ENCODE measurements at regions of chr12 and their contacts with region 1.

Region 1: DNA sequence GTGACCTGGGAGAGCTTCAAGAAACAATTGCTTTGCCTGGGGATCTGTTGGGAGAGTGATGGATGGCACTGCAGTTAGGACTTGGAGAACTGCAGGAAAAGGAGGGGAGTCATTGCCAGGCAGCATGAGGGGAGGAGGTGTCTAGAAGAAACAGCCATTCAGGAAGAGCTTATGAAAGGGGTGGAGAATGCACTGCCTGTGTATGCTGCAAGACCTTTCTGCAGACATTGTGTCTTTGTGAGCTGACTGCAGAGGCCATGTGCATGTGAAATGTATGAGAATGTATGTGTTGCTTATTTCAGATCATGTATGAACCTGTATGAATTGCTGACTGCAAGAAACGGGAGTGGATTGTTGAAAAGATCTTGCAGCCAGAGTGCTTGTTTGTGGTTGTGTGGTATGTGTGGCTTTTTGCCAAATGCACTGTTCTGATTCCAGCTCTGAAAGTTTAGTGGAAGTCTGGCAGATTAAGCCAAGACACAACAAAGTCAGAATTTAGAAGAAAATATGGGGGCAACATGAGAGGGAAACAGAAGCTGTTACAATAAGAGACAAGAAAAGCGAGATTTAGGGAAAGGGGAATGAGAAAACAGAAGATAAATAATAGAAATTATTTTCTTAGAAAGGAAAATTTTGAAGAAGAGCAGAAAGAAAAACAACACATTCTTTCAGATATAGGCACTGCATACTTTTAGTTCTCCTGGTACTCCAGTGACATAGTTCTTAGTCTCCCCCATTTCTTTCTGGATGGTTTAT is 9.8 kb upstream of the RIMKLB start:
- DNase-seq: peak in 3 of 10 donors; percentile 31 to 39 (median 32)
- H3K4me3 ChIP-seq: peak overlapping the region in 7 of 59 donors; percentile 0 to 26 (median 12)
- H3K27ac ChIP-seq: peak overlapping the region in 37 of 59 donors; percentile 1 to 73 (median 45)
- H3K27me3 ChIP-seq: no peaks in the 10 kb centered on the region
- CTCF ChIP-seq: no peak

Region 2: DNA sequence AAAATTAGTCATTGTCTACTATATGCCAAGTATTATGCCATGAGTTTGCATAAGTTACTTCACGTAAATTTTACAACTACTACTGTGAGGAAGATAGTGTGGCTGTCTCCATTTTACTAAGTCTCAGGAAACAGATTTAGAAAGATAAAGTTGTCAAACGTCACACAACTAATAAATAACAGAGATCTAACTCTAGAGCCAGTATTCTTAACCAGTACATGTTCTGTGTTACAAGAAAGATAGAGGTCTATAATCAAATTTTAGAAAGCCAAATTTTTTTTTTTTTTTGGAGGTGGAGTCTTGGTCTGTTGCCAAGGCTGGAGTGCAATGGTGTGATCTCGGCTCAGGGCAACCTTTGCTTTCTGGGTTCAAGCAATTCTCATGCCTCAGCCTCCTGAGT is 955.0 kb before region 1 on chr12:
- intact Hi-C with region 1: no loop called
- DNase-seq: no peak
- H3K4me3 ChIP-seq: no peak overlapping the region
- H3K27ac ChIP-seq: no peak overlapping the region
- H3K27me3 ChIP-seq: peaks cover 0 to 3% (median 0%) of the 10 kb centered on the region in 45 donors
- CTCF ChIP-seq: no peak

Region 3: GRCh38 chr12:8637666-8638065 is 50.4 kb before region 1 on chr12:
- intact Hi-C with region 1: no loop called
- DNase-seq: peak in 1 of 10 donors; percentile 9
- H3K4me3 ChIP-seq: no peak overlapping the region
- H3K27ac ChIP-seq: no peak overlapping the region
- H3K27me3 ChIP-seq: no peaks in the 10 kb centered on the region
- CTCF ChIP-seq: no peak

Region 4: GRCh38 chr12:8823565-8824300 is 135.7 kb after region 1 on chr12:
- intact Hi-C with region 1: loop called in 1 of 2 experiments (anchors 2 kb)
- DNase-seq: peak in 1 of 10 donors; percentile 11
- H3K4me3 ChIP-seq: peak overlapping the region in 6 of 59 donors; percentile 4 to 38 (median 18)
- H3K27ac ChIP-seq: peak overlapping the region in 44 of 59 donors; percentile 9 to 81 (median 58)
- H3K27me3 ChIP-seq: peaks cover 0 to 2% (median 0%) of the 10 kb centered on the region in 45 donors
- CTCF ChIP-seq: peak in 54 of 56 donors; percentile 28 to 73 (median 54)

Region 5: DNA sequence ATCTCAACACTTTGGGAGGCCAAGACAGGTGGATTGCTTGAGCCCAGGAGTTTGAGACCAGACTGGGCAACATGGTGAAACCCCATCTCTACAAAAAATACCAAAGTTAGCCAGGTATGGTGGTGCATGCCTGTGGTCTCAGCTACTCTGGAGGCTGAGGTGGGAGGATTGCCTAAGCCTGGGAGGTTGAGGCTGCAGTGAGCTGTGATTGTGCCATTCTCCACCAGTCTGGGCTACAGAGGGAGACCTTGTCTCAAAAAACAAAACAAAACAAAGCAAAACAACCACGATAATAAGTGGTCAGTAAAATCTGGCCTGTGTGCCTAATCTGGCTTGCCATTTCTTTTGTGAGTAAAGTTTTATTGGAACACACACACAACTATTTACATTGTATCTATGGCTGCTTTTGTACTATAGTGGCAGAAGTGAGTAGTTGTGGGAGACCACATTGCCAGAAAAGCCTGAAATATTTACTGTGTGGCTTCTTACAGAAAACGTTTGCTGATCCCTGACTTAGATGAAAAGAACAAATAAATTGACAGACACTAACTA is 281.9 kb after region 1 on chr12:
- intact Hi-C with region 1: no loop called
- DNase-seq: no peak
- H3K4me3 ChIP-seq: no peak overlapping the region
- H3K27ac ChIP-seq: peak overlapping the region in 6 of 59 donors; percentile 4 to 66 (median 22)
- H3K27me3 ChIP-seq: no peaks in the 10 kb centered on the region
- CTCF ChIP-seq: no peak

Region 6: DNA sequence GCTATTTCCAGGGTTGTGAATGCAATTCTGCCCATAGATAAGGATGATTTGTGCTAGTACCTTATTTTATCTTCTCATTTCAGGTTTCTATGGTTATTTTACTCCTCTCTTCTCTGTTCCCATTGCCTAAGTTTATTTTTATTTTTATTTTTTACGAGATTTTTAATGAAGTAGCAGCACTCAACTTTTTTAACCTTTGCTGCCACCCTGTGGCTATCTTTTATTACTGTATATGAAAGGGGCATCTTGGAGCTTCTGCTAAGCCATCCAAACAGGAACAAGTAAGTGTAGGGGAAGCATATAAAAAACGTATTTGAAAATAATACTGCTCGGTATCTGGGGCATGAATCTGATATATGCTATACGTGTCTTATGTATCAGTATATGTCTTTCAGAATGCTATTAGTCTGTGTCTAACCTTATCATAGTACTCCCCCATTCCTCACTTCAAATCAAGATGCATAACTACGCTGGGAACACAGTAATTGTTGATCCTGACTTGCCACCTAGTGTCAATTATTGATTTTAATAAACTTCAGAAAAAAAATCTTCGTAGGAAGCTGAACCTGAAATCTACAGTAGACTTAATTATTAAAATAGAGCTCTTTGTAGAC is 361.6 kb after region 1 on chr12:
- intact Hi-C with region 1: loop called in 1 of 2 experiments (anchors 10 kb)
- DNase-seq: no peak
- H3K4me3 ChIP-seq: no peak overlapping the region
- H3K27ac ChIP-seq: no peak overlapping the region
- H3K27me3 ChIP-seq: no peaks in the 10 kb centered on the region
- CTCF ChIP-seq: peak in 55 of 56 donors; percentile 27 to 74 (median 52)

Measured in dorsolateral prefrontal cortex (tissue), 120 donors.